Natural killer cell (primary cell): ENCODE measurements at regions of chr13 and their contacts with region 1.

Region 1: GRCh38 chr13:21603531-21604448 is at the start of gene MICU2:
- DNase-seq: peak; percentile 92 to 98
- ATAC-seq: peak; percentile 90 to 97 (median 92)
- H3K4me3 ChIP-seq: peak within 1 kb of the TSS; percentile 85
- H3K4me3 Mint-ChIP-seq: peak within 1 kb of the TSS; percentile 90
- H3K27ac ChIP-seq: peak within 1 kb of the TSS; percentile 97
- H3K27ac Mint-ChIP-seq: peak within 1 kb of the TSS; percentile 91 to 93
- H3K4me1 ChIP-seq: peaks cover 15% of the 10 kb centered on the region
- H3K4me1 Mint-ChIP-seq: peaks cover 38 to 42% of the 10 kb centered on the region in 2 donors
- H3K27me3 ChIP-seq: peaks cover 5% of the 10 kb centered on the region
- H3K27me3 Mint-ChIP-seq: peaks cover 8 to 12% of the 10 kb centered on the region in 2 donors
- CTCF ChIP-seq: no peak
- total RNA-seq, gene MICU2: 40.2 to 47.1 (median 41.4) TPM

Region 2: DNA sequence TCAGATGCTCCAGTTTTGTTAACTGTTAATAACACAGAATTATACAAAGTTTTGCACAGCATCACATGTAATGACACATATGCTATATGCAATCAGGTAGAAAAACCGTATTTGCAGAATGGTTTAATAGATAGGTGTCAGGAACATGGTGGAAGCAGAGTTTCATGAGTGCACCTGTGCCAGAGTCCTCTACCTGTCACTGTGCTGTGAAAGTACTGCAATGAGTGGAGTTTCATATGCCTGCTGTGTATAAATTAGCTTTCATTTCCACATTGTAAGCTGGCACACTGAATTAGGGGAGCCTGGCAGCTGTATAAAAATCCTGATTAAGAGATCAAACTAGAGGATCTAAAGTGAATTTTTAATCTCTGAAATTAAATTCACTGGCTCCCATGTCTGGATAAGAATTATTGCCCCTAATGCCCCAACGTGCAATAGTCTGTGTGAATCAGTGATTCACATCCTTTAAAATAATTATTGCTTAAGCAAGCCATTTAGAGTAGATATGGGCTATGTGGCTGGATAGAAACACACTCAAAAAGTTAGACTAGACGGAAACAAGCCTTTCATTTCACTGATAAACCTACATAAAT is 821.6 kb before region 1 on chr13:
- intact Hi-C with region 1: no loop called
- DNase-seq: no peak
- ATAC-seq: no peak
- H3K4me3 ChIP-seq: no peak overlapping the region
- H3K4me3 Mint-ChIP-seq: no peak overlapping the region
- H3K27ac ChIP-seq: no peak overlapping the region
- H3K27ac Mint-ChIP-seq: no peak overlapping the region
- H3K4me1 ChIP-seq: no peaks in the 10 kb centered on the region
- H3K4me1 Mint-ChIP-seq: no peaks in the 10 kb centered on the region
- H3K27me3 ChIP-seq: no peaks in the 10 kb centered on the region
- H3K27me3 Mint-ChIP-seq: no peaks in the 10 kb centered on the region
- CTCF ChIP-seq: no peak

Region 3: DNA sequence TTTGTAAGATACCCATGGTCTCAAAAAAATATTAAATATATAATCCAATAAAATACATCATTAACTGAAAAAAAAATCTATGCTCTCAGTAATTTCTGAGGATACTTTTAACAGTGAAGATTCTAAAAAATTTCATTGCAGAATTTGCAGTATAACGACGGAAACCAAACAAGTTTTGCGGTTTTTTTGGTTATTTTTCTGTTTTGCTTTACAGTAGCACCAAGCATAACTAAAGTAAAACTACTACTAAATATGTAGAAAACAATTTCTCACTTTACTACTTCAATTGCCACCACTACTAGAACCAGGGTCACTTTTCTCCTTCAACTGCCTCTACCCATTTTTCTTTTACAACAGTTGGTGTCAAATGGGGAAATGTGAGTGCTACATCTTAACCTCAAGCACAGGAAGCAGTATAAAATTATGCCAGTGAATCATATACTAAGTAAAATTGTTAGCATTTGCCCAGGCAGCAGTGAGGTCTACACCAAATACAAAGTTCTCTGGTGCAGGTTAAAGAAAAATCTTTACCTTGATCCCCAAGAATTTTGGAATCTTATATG is 24.0 kb before region 1 on chr13:
- intact Hi-C with region 1: loop called (anchors 1 kb)
- DNase-seq: peak in 1 of 2 donors; percentile 59
- ATAC-seq: peak; percentile 85 to 91 (median 89)
- H3K4me3 ChIP-seq: no peak overlapping the region
- H3K4me3 Mint-ChIP-seq: peak overlapping the region; percentile 78
- H3K27ac ChIP-seq: peak overlapping the region; percentile 70
- H3K27ac Mint-ChIP-seq: peak overlapping the region; percentile 78 to 90
- H3K4me1 ChIP-seq: peaks cover 17% of the 10 kb centered on the region
- H3K4me1 Mint-ChIP-seq: peaks cover 39 to 42% of the 10 kb centered on the region in 2 donors
- H3K27me3 ChIP-seq: no peaks in the 10 kb centered on the region
- H3K27me3 Mint-ChIP-seq: no peaks in the 10 kb centered on the region
- CTCF ChIP-seq: no peak

Region 4: DNA sequence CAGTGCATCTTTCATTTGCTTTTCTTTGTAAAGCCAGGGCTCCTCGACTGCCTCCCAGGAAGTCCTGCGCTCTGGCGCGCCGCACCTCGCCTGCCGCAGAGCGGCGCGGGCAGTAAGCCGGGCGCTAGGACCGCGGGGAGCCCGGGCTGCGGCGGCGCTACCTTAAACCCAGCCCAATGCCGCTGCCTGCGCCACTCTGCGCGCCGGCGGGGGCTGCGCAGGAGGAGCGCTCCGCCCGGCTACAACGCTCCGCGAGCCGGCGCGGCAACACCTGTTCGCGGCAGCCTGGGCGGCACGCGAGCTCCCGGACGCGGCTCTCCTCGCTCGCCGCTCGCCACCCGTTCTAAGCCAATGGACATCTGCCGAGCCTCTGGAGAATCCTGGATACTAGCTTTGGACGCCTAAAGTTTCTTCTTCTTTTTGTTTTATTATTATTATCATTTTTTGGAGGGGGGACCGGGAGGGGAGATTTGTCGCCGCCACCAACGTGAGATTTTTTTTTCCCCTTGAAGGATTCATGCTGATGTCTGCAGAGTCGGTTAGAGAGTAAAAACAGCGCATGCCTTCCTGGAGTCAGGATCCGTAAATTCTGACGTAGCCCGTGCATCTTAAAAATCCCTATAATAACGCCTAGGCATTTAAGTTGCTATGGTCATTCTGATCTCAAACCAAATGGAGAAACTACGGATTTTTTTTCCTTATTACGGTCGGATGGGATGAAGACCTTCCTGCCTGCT is 67.3 kb after region 1 on chr13 and contains the start of gene FGF9:
- intact Hi-C with region 1: loop called (anchors 1 kb)
- DNase-seq: peak; percentile 78 to 92
- ATAC-seq: peak; percentile 73 to 86 (median 77)
- H3K4me3 ChIP-seq: peak within 1 kb of the TSS; percentile 61
- H3K4me3 Mint-ChIP-seq: peak within 1 kb of the TSS; percentile 98
- H3K27ac ChIP-seq: no peak within 1 kb of the TSS
- H3K27ac Mint-ChIP-seq: peak within 1 kb of the TSS; percentile 79 to 87
- H3K4me1 ChIP-seq: peaks cover 55% of the 10 kb centered on the region
- H3K4me1 Mint-ChIP-seq: peaks cover 49 to 58% of the 10 kb centered on the region in 2 donors
- H3K27me3 ChIP-seq: peaks cover 27% of the 10 kb centered on the region
- H3K27me3 Mint-ChIP-seq: peaks cover 16 to 36% of the 10 kb centered on the region in 2 donors
- CTCF ChIP-seq: no peak
- total RNA-seq, gene FGF9: 0.28 to 1.2 (median 0.80) TPM